Left ventricle myocardium inferior (tissue), 1 donor: ENCODE measurements at regions of chr10 and their contacts with region 1.

Region 1: GRCh38 chr10:13673156-13673555 is 86.4 kb downstream of the PRPF18 start:
- DNase-seq: no peak
- H3K4me3 ChIP-seq: no peak overlapping the region
- H3K27ac ChIP-seq: no peak overlapping the region
- H3K4me1 ChIP-seq: peaks cover 38% of the 10 kb centered on the region
- H3K27me3 ChIP-seq: no peaks in the 10 kb centered on the region
- CTCF ChIP-seq: no peak

Region 2: GRCh38 chr10:13717931-13718772 is 45.0 kb after region 1 on chr10:
- intact Hi-C with region 1: loop called (anchors 5 kb)
- DNase-seq: peak; percentile 86
- H3K4me3 ChIP-seq: peak overlapping the region; percentile 61
- H3K27ac ChIP-seq: peak overlapping the region; percentile 86
- H3K4me1 ChIP-seq: peaks cover 54% of the 10 kb centered on the region
- H3K27me3 ChIP-seq: no peaks in the 10 kb centered on the region
- CTCF ChIP-seq: no peak